Activated naive CD4-positive, alpha-beta T cell treated with anti-CD3 and anti-CD28 coated beads for 36 hours (primary cell): ENCODE measurements at regions of chr1 and their contacts with region 1.

Region 1: DNA sequence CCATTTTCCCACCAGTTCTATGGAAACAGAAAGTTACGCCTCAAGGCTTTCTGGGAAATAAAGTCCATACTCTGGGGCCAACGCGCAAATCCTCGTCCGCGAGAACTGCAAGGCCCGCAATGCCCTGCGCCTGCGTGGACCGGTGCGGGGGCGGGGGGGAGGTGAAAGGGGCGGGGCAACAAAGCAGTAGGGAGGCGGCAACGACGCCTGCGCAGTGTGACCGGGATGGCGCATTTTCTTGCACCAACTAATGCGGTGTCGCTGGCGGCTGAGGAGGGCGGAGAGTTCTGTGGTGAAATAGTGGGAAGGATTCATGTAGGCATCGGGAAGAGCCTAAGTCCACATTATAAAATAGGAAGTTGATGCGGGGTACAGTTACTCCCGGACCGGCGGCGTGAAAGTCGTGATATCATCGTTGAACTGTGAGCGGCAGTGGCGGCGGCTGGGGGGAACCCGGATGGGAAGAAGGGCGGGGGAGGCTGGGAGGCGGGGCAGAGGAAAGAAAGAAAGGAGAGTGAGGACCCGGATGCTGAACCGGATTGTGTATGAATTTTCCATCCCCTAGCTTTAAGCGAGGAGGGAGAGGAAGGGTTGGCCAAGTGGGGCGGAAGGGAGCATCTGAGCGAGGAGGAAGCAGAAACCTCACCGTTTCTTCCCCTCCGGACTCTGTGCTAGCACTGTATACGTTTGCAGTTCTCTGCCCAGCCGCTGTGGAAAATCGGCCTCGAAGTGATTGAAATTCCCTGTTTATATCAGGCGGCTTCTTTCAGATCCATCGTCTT is at the start of gene GGPS1:
- DNase-seq: peak; percentile 99
- H3K4me3 Mint-ChIP-seq: no peak within 1 kb of the TSS
- H3K27ac Mint-ChIP-seq: peak within 1 kb of the TSS; percentile 94
- H3K4me1 Mint-ChIP-seq: peaks cover 31% of the 10 kb centered on the region
- H3K27me3 Mint-ChIP-seq: no peaks in the 10 kb centered on the region
- total RNA-seq, gene GGPS1: 35.3 to 36.9 TPM

Region 2: GRCh38 chr1:234610348-234611152 is 718.0 kb before region 1 on chr1:
- CTCF ChIA-PET with region 1: no interaction called
- intact Hi-C with region 1: loop called (anchors 1 kb)
- DNase-seq: peak; percentile 91
- H3K4me3 Mint-ChIP-seq: peak overlapping the region; percentile 84
- H3K27ac Mint-ChIP-seq: peak overlapping the region; percentile 96
- H3K4me1 Mint-ChIP-seq: peaks cover 33% of the 10 kb centered on the region
- H3K27me3 Mint-ChIP-seq: no peaks in the 10 kb centered on the region

Region 3: DNA sequence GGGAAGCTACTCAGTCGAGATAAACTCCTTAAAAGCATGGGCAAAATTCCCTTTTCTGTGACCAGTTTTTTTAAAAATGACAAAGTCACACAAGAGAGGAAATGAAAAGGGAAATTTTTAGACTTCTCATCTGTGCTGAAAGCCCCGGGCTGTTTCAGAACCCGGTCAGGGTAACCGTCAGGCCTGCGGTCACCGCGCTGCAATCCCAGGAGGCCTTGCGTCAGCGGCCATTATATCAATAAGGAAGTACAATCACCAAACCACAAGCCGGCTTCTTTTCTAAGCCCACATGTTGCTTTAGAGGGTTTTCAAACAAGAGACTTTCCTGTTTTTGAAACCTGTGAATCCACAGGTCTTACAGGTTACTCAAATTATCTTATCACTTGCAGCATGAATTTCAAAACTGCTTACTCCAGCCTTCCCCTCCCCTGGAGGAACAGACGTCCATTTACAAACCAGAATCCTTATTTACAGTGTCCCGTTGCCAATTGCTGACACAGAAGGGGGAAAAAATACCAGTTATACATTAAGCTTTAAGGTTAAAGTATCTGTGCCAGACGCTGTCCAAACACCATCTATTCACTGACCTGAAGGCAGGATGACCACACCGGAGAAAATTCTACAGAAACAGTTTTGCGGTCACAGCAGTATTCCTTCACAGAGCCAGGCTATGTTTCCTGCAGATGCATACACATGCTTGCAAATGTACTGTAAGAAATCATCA is 365.2 kb before region 1 on chr1:
- CTCF ChIA-PET with region 1: no interaction called
- intact Hi-C with region 1: loop called (anchors 2 kb)
- DNase-seq: peak; percentile 98
- H3K4me3 Mint-ChIP-seq: peak overlapping the region; percentile 35
- H3K27ac Mint-ChIP-seq: peak overlapping the region; percentile 97
- H3K4me1 Mint-ChIP-seq: peaks cover 72% of the 10 kb centered on the region
- H3K27me3 Mint-ChIP-seq: no peaks in the 10 kb centered on the region

Region 4: DNA sequence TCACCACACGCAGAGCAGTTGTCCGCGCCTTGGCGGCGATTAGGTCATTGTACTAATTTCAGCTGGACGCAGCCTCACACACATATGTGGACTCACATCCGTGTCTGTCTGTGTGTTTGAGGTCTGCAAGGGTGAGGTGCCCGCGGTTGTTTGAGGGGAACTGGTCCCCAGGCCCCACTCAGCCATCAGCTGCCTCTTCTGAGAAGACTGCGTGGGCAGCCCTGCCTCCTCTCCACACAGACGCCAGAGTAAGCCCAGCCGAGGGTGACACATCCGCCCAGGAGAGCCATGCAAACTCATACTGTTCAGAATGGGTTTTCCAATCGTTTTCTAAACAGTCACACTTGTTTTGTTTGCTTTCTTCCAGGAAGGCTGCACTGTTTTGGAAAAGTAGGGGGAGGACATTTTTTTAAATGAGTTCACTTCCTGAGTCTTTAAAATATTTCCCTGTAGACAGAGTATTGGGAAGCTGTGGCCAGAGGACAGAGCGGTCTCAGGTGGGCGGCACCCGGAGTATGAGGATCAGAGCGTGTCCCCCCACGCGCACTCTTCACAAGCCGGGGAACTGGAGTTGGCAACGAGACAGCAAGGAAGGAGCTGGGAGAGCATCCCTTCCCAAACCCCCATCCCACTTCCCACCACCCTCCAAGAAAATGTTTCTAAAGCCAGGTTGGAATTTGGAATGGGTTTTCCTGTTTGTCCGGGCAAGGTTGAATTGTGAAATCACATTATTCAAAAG is 253.2 kb before region 1 on chr1:
- CTCF ChIA-PET with region 1: no interaction called
- intact Hi-C with region 1: no loop called
- DNase-seq: peak; percentile 83
- H3K4me3 Mint-ChIP-seq: peak overlapping the region; percentile 0
- H3K27ac Mint-ChIP-seq: peak overlapping the region; percentile 90
- H3K4me1 Mint-ChIP-seq: peaks cover 36% of the 10 kb centered on the region
- H3K27me3 Mint-ChIP-seq: no peaks in the 10 kb centered on the region

Region 5: DNA sequence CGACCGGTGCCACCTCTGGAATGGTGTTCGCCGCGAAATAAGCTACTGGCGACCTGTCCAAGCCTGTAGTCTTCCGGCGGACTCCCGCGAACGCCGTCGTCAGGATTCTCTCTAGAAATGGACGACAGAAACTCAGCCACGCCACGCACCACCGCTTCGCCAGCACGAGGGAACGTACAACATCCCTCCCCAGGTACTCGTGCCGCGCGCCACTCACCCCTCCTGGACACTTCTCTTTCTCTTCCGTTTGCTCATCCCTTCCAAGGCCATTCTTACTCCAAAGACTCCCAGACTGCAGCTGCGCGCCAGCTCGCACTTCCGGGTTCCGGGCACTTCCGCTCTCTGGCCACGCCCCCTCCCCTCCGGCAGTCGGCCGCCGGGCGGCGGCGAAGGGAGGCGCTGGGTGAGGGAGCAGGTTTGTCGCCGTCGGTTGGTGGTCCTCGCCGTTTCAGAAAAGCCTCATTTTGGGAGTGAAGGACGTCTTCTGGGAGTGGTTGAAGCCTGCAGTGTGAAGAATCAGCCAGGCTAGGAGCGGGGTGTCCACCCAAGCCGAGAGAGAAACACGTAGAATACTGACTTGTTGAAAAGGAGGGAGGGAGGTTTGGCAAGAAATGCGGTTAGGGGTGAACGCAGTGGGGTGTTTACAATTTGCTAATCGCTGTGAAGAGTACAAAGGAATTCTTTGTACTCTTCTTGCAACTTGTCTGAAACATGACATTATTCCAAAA is 167.4 kb before region 1 on chr1 and contains the start of gene RBM34:
- CTCF ChIA-PET with region 1: interaction called, 4 read pairs
- intact Hi-C with region 1: loop called (anchors 1 kb)
- DNase-seq: peak; percentile 94
- H3K4me3 Mint-ChIP-seq: peak within 1 kb of the TSS; percentile 100
- H3K27ac Mint-ChIP-seq: peak within 1 kb of the TSS; percentile 99
- H3K4me1 Mint-ChIP-seq: peaks cover 26% of the 10 kb centered on the region
- H3K27me3 Mint-ChIP-seq: no peaks in the 10 kb centered on the region
- total RNA-seq, gene RBM34: 104 TPM

Region 6: DNA sequence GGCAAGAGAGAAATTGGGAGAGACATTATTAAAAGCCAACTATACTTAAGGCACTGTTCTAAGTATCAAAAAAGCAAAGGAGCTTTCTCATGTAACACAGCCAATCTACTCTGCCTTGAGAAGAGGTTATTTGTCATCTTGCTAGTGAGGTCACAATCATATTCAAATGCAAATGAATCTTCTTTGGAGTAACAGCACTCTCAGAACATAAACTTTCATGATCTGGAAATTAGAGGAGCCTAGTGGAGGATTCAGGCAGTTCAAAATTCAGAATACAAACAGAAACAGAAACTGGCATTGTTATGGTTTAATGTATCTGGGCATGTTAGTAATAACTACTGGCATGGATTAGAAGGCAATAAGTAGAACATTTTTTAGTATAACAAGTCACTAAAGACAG is 57.9 kb before region 1 on chr1:
- CTCF ChIA-PET with region 1: interaction called, 4 read pairs
- intact Hi-C with region 1: loop called (anchors 1 kb)
- DNase-seq: no peak
- H3K4me3 Mint-ChIP-seq: no peak overlapping the region
- H3K27ac Mint-ChIP-seq: peak overlapping the region; percentile 75
- H3K4me1 Mint-ChIP-seq: peaks cover 65% of the 10 kb centered on the region
- H3K27me3 Mint-ChIP-seq: no peaks in the 10 kb centered on the region

Region 7: DNA sequence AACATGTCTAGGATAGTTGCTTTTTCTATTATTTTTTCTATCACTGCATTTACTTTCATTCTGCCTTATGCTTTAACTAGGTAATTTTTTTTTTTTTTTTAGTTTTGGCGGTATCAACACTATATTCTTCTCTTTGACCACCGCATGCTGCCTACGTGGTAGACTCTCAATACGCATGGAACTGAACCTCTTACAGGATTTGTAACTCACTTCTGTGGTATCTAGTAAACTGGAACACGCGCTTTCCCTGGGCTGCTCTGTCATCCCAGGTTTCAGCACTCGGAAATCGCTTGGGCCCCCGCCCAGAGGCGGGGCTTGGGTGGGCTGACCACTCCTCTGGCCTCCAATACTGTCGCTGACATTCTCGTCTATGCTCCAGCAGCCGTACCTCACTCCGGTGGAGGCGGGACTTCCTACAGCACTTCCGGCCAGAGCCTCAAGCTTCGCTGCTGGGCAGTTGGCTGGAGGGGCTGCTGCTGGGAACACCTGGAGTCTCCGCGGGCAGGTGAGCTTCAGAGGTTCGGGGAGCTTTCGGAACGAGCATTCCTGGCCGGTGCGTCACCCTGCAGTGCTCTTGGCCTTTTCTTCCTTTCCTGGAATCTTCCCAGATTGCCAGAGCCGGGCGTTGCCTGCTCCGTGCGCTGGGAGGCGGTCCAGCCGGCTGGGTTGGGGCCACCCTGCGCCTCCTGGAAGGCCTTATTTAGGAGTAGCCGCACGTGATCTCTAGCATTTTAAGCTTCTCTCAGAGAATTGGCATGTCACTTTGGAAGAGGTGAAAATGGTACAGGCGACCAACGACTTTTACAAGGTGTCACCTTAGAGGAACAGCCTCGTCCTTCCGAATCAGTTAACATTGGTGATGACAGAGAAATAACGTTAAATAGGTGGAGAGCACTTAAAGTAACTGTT is 38.7 kb after region 1 on chr1 and contains the start of gene TBCE:
- CTCF ChIA-PET with region 1: no interaction called
- intact Hi-C with region 1: loop called (anchors 1 kb)
- DNase-seq: peak; percentile 92
- H3K4me3 Mint-ChIP-seq: peak within 1 kb of the TSS; percentile 96
- H3K27ac Mint-ChIP-seq: peak within 1 kb of the TSS; percentile 90
- H3K4me1 Mint-ChIP-seq: peaks cover 27% of the 10 kb centered on the region
- H3K27me3 Mint-ChIP-seq: no peaks in the 10 kb centered on the region
- total RNA-seq, gene TBCE: 18.8 to 22.1 TPM

Region 8: DNA sequence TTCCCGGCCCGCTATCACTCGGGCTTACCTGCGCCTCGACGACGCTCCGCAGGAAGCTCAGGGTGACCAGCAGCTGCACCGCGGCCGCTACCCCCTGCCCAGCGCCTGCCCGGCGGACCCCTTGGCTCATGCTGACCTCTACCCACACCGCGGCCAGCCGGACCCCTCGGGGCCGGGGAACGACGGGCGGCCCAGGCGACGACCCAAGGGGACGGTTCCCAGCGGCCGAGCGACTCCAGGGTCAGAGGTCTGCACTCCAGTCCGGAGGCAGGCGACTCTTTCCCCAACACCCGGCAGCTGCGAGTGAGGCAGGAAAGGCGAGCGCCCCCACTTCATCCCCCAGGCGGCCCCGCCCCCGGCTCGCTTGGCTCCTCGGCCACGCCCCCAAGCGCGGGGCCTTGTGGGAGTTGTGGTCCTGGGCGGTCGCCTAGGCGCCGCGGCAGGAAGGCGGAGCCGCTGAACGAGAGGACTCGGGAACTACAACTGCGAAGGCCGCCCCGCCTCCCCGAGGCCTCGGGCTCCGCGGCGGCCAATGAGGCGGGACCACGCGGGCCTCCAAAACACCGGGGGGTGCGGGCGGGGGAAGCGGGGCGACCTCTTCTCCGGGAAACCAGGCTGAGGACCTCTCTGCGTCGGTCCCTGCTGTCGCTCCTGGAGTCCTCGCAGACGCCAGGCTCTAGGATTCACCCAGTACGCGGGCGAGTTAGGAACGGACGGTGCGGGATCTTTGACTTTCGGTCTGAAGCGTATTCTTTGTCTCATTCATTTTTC is 953.3 kb after region 1 on chr1 and contains the start of gene ERO1B:
- CTCF ChIA-PET with region 1: no interaction called
- intact Hi-C with region 1: loop called (anchors 2 kb)
- DNase-seq: peak; percentile 95
- H3K4me3 Mint-ChIP-seq: peak within 1 kb of the TSS; percentile 91
- H3K27ac Mint-ChIP-seq: peak within 1 kb of the TSS; percentile 66
- H3K4me1 Mint-ChIP-seq: peaks cover 41% of the 10 kb centered on the region
- H3K27me3 Mint-ChIP-seq: no peaks in the 10 kb centered on the region
- total RNA-seq, gene ERO1B: 1.6 to 2.5 TPM